ENCODE measurements at regions of chr1 and their contacts with region 1.

Region 1: GRCh38 chr1:193121616-193122593 is at the start of gene CDC73:
- DNase-seq: peak; percentile 94
- CTCF ChIP-seq: peak; percentile 93

Region 2: GRCh38 chr1:193111641-193112090 is 10.2 kb before region 1 on chr1:
- CTCF ChIA-PET with region 1: interaction called, 11 read pairs
- POLR2A ChIA-PET with region 1: no interaction called
- DNase-seq: no peak
- CTCF ChIP-seq: no peak

Region 3: GRCh38 chr1:193143285-193143684 is 21.4 kb after region 1 on chr1:
- CTCF ChIA-PET with region 1: interaction called, 40 read pairs
- POLR2A ChIA-PET with region 1: no interaction called
- DNase-seq: no peak
- CTCF ChIP-seq: peak; percentile 11

Region 4: DNA sequence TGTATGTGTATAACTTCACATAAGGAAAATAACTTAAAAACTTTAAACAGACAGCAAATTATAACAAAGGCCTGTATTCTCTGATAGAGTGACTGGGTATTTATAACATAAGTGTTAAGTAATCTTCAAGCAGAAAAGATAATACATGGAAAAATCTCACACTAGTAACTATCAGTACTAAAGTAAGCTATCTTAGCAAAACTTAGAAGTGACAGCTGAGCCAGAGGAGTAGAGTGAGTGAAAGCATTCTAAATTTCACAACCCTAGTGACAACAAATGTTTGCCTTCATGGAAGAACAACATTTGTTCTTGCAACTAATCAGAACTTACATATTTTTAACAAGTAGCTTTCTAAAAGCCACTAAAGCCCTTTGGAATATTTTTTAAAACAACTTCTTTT is 139.0 kb after region 1 on chr1:
- CTCF ChIA-PET with region 1: no interaction called
- POLR2A ChIA-PET with region 1: no interaction called
- DNase-seq: no peak
- CTCF ChIP-seq: no peak